ENCODE measurements at regions of chr13 and their contacts with region 1.

Region 1: GRCh38 chr13:20828539-20829364 is 55.0 kb upstream of the EEF1AKMT1 start:
- DNase-seq: peak; percentile 26
- ATAC-seq: peak; percentile 90
- H3K4me3 ChIP-seq: no peak overlapping the region
- H3K27ac ChIP-seq: no peak overlapping the region
- H3K4me1 ChIP-seq: no peaks in the 10 kb centered on the region
- H3K27me3 ChIP-seq: no peaks in the 10 kb centered on the region
- CTCF ChIP-seq: peak; percentile 75 to 80 (median 76)
- EP300 ChIP-seq: no peak
- POLR2A ChIP-seq: no peak
- RAD21 ChIP-seq: peak; percentile 81

Region 2: DNA sequence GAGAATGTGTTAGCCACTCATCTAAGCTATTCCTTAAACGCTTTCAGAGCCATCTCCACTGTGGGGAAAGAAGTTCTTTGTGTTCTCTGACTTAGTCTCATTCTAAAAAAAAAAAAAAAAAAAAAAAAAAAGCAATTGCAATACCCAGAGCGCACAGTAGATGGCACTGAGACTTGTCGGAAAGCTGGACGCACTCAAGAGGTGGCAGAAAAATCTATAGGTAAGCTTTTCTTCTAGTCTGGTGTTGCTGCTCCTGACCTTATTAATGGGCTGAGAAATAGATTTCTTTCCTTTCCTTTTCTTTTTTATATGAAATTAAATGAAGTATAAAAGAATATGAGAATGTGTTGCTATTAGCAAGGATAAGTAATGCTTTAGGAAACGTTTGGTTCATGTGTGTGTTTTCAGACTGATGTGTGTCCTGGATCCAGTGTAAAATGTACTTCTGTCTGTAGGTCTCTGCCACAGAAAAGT is 631.4 kb before region 1 on chr13:
- CTCF ChIA-PET with region 1: interaction called, 19 read pairs
- POLR2A ChIA-PET with region 1: no interaction called
- RAD21 ChIA-PET with region 1: no interaction called
- SMC1A ChIA-PET with region 1: interaction called, 4 read pairs
- in situ Hi-C with region 1: loop called (anchors 25 kb)
- intact Hi-C with region 1: loop called (anchors 5 kb)
- DNase-seq: no peak
- ATAC-seq: peak; percentile 64
- H3K4me3 ChIP-seq: no peak overlapping the region
- H3K27ac ChIP-seq: no peak overlapping the region
- H3K4me1 ChIP-seq: peaks cover 6% of the 10 kb centered on the region; the same call in 1 of the 2 replicates
- H3K27me3 ChIP-seq: peaks cover 4 to 21% of the 10 kb centered on the region in 2 experiments; a peak in 3 of 4 replicates
- CTCF ChIP-seq: peak; percentile 71 to 79 (median 73)
- EP300 ChIP-seq: no peak
- POLR2A ChIP-seq: no peak
- RAD21 ChIP-seq: peak; percentile 85

Region 3: DNA sequence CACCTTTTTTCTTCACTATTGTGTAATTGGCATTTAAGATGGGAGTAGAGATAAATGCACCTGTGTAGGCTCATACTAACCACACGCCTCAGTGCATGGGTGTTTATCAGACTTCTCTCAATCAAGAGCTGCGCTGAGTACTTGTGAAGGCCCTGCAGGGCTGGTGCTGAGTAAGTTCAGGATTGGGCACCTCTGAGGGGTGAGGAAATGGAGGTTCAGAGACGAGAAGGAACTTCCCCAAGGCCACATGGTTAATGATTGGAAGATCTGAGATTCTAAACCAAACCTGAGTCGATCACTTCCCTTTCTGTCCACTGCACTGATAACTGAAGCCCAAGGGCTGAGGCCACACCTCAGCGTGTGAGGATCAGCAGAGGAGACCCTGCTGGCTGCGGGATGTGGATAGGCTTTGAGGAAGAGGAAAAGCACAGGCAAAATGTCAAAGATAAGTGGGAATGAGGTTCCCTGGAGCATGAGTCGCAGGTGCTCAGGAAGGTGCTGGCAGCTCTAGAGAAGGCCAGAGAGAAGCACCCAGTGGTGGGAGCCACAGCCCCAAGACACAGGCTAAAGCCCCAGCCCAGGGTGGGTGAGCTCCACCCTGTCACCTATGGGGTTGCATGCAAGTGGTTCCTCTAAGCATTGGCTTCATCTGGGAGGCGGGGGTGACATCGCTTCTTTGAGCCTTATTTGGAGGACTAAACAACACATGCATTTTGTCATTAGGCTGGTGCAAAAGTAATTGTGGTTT is 564.3 kb before region 1 on chr13:
- CTCF ChIA-PET with region 1: no interaction called
- POLR2A ChIA-PET with region 1: no interaction called
- RAD21 ChIA-PET with region 1: no interaction called
- SMC1A ChIA-PET with region 1: no interaction called
- in situ Hi-C with region 1: no loop called
- intact Hi-C with region 1: no loop called
- DNase-seq: peak; percentile 55
- ATAC-seq: peak; percentile 99
- H3K4me3 ChIP-seq: no peak overlapping the region
- H3K27ac ChIP-seq: no peak overlapping the region
- H3K4me1 ChIP-seq: no peaks in the 10 kb centered on the region
- H3K27me3 ChIP-seq: no peaks in the 10 kb centered on the region; a peak in 1 of 4 replicates
- CTCF ChIP-seq: no peak
- EP300 ChIP-seq: peak; percentile 32 to 34; a peak in 1 of 4 replicates
- POLR2A ChIP-seq: no peak
- RAD21 ChIP-seq: no peak

Region 4: GRCh38 chr13:20441879-20442278 is 386.9 kb before region 1 on chr13:
- CTCF ChIA-PET with region 1: no interaction called
- POLR2A ChIA-PET with region 1: no interaction called
- RAD21 ChIA-PET with region 1: no interaction called
- SMC1A ChIA-PET with region 1: no interaction called
- in situ Hi-C with region 1: no loop called
- intact Hi-C with region 1: no loop called
- DNase-seq: no peak
- ATAC-seq: peak; percentile 65
- H3K4me3 ChIP-seq: no peak overlapping the region
- H3K27ac ChIP-seq: no peak overlapping the region
- H3K4me1 ChIP-seq: peaks cover 8% of the 10 kb centered on the region; the same call in 1 of the 2 replicates
- H3K27me3 ChIP-seq: no peaks in the 10 kb centered on the region
- CTCF ChIP-seq: no peak
- EP300 ChIP-seq: no peak
- POLR2A ChIP-seq: no peak
- RAD21 ChIP-seq: no peak

Region 5: DNA sequence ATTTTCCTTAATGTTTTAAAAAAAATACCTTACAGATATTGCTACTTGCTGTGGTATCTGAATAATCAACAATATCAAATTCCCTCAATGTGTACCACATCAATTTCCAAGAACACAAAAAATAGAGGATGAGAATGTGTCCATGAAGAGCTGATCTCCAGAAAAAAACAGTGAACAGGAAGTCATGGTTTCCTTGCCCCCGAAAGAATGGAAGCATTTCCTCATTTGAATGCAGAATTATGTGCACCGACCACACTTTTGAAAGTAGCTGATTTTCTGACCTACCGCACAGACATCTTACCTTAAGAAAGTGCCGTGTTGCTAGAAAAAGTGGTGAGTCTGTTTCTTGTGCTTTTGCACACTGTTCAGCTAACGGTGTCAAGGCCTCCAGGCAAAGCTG is 41.6 kb before region 1 on chr13:
- CTCF ChIA-PET with region 1: no interaction called
- POLR2A ChIA-PET with region 1: no interaction called
- RAD21 ChIA-PET with region 1: no interaction called
- SMC1A ChIA-PET with region 1: no interaction called
- in situ Hi-C with region 1: no loop called
- intact Hi-C with region 1: no loop called
- DNase-seq: no peak
- ATAC-seq: no peak
- H3K4me3 ChIP-seq: no peak overlapping the region
- H3K27ac ChIP-seq: no peak overlapping the region
- H3K4me1 ChIP-seq: peaks cover 6% of the 10 kb centered on the region
- H3K27me3 ChIP-seq: no peaks in the 10 kb centered on the region
- CTCF ChIP-seq: no peak
- EP300 ChIP-seq: no peak
- POLR2A ChIP-seq: no peak
- RAD21 ChIP-seq: no peak

Region 6: DNA sequence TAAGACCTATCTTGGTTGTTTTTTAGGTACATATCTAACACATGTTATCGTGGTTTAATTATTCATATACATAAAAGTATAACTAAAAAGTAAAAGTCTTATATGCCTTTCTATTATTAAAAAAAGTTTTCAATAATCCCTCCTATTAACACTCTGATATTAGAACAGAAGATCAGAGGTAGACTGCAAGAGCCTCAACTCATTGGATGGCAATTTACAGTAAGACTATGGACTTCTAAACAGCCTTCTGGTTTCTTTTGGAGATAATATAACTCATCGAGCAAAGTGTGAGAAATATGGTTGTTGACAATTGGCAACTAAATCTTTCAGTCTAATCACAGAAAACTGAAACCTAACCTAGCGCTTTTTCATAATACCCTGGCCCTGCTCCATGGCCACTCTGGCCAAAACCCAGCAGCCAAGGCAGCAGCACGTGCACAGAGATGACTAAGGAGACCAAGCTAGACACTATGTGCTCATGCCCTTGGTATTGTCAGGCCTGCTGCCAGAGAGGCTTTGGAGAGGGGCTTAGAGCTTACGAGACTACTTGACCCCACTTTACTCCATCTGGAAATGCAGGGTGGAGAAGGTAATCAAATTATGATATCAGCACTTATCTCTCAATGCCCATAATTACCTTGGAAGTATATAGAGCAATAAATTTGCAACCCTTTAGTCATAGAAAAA is 14.4 kb before region 1 on chr13:
- CTCF ChIA-PET with region 1: interaction called, 33 read pairs
- POLR2A ChIA-PET with region 1: no interaction called
- RAD21 ChIA-PET with region 1: interaction called, 3 read pairs
- SMC1A ChIA-PET with region 1: interaction called, 6 read pairs
- in situ Hi-C with region 1: no loop called
- intact Hi-C with region 1: no loop called
- DNase-seq: no peak
- ATAC-seq: no peak
- H3K4me3 ChIP-seq: no peak overlapping the region
- H3K27ac ChIP-seq: no peak overlapping the region
- H3K4me1 ChIP-seq: no peaks in the 10 kb centered on the region
- H3K27me3 ChIP-seq: no peaks in the 10 kb centered on the region
- CTCF ChIP-seq: no peak
- EP300 ChIP-seq: no peak
- POLR2A ChIP-seq: no peak
- RAD21 ChIP-seq: no peak

Region 7: DNA sequence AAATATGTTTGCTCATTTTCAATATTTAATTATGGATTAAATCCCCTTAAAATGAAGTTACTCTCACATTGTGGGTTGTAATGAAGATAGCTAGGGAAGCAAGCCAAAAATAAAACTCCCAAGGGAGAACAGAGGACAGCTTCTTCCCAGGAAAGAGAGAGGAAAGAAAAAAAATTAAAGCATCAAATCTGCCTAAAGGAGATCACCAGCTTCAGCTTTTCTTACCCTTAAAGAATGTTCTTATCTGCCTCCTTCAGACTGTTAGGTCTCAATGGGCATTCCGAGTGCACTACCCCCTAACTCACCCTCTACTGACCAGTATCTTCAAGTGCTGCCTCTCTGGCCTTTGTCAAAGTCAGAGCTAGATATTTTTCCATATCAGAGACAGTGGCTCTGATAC is 18.5 kb after region 1 on chr13:
- CTCF ChIA-PET with region 1: interaction called, 35 read pairs
- POLR2A ChIA-PET with region 1: no interaction called
- RAD21 ChIA-PET with region 1: interaction called, 3 read pairs
- SMC1A ChIA-PET with region 1: interaction called, 5 read pairs
- in situ Hi-C with region 1: no loop called
- intact Hi-C with region 1: no loop called
- DNase-seq: no peak
- ATAC-seq: no peak
- H3K4me3 ChIP-seq: no peak overlapping the region
- H3K27ac ChIP-seq: no peak overlapping the region
- H3K4me1 ChIP-seq: no peaks in the 10 kb centered on the region
- H3K27me3 ChIP-seq: no peaks in the 10 kb centered on the region
- CTCF ChIP-seq: no peak
- EP300 ChIP-seq: no peak
- POLR2A ChIP-seq: no peak
- RAD21 ChIP-seq: no peak

Measured in GM12878 (cell line).